Activated B cell treated with CpG ODN at 0.5 μM for 24 hours (primary cell): ENCODE measurements at regions of chr2 and their contacts with region 1.

Region 1: DNA sequence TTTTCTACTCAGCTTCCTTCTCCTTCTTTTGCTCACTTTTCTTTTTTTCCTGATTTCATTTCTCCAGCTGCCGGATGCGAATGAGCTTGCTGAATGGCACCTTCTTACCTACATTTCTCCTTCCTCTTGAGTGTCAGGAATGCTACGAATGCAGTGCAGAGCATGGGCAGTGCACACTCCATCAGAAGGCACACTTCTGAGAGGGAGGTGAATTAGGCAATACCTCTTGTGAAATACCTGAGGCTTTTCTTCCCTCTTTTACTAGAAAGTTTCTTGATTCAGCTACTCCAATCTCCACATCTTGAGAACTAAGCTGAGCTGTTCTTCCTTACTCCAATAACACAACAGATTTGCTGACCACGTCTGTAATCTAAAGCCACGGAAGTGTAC is 51.1 kb downstream of the PLEKHM3 start:
- DNase-seq: no peak
- ATAC-seq: no peak
- H3K4me3 Mint-ChIP-seq: no peak overlapping the region
- H3K27ac Mint-ChIP-seq: no peak overlapping the region
- H3K4me1 Mint-ChIP-seq: peaks cover 17% of the 10 kb centered on the region
- H3K27me3 Mint-ChIP-seq: no peaks in the 10 kb centered on the region
- CTCF ChIP-seq: no peak

Region 2: GRCh38 chr2:207954753-207955152 is 19.5 kb before region 1 on chr2:
- CTCF ChIA-PET with region 1: no interaction called
- POLR2A ChIA-PET with region 1: no interaction called
- intact Hi-C with region 1: loop called (anchors 2 kb)
- DNase-seq: no peak
- ATAC-seq: no peak
- H3K4me3 Mint-ChIP-seq: no peak overlapping the region
- H3K27ac Mint-ChIP-seq: no peak overlapping the region
- H3K4me1 Mint-ChIP-seq: peaks cover 13% of the 10 kb centered on the region
- H3K27me3 Mint-ChIP-seq: no peaks in the 10 kb centered on the region
- CTCF ChIP-seq: no peak

Region 3: DNA sequence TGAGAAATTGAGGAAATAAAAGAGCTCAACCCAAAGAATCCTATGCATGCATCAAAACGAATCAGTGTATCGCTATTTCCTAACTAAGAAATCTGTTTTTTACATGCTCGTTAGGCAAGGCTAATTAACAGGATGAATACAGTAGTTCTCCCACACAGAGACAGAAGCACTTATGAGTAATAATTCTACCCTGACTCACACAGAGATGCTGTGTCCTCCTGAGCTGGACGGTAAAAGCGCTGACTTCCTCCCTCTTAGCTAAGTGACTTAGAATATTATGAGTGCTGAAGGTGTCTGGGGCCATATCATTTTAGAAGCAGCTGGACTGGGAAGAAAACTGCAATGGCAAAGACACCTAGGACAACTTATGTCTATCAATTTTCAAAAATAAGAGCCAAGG is 32.6 kb after region 1 on chr2:
- CTCF ChIA-PET with region 1: no interaction called
- POLR2A ChIA-PET with region 1: interaction called, 13 read pairs
- intact Hi-C with region 1: no loop called
- DNase-seq: no peak
- ATAC-seq: peak; percentile 28
- H3K4me3 Mint-ChIP-seq: no peak overlapping the region
- H3K27ac Mint-ChIP-seq: no peak overlapping the region
- H3K4me1 Mint-ChIP-seq: peaks cover 5% of the 10 kb centered on the region
- H3K27me3 Mint-ChIP-seq: no peaks in the 10 kb centered on the region
- CTCF ChIP-seq: no peak

Region 4: DNA sequence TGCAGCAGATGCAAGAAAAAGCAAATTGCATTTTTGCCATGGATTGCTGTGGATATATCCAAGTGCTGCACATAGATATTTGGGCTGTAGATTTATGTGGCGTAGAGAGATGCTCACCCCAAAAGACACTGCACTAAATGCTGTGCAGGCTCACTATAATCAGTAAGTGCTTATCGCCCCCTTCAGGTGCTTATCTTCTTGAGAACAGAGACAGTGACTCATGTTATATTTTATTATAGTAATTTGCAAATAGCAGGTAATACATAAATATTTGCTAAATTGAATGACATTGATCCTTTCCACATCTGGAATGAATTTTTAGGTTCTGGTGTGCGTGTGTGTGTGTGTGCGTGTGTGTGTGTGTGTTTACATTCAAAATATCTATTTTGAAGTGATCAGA is 87.9 kb after region 1 on chr2:
- CTCF ChIA-PET with region 1: no interaction called
- POLR2A ChIA-PET with region 1: no interaction called
- intact Hi-C with region 1: no loop called
- DNase-seq: no peak
- ATAC-seq: no peak
- H3K4me3 Mint-ChIP-seq: no peak overlapping the region
- H3K27ac Mint-ChIP-seq: no peak overlapping the region
- H3K4me1 Mint-ChIP-seq: peaks cover 6% of the 10 kb centered on the region
- H3K27me3 Mint-ChIP-seq: peaks cover 6% of the 10 kb centered on the region
- CTCF ChIP-seq: no peak

Region 5: DNA sequence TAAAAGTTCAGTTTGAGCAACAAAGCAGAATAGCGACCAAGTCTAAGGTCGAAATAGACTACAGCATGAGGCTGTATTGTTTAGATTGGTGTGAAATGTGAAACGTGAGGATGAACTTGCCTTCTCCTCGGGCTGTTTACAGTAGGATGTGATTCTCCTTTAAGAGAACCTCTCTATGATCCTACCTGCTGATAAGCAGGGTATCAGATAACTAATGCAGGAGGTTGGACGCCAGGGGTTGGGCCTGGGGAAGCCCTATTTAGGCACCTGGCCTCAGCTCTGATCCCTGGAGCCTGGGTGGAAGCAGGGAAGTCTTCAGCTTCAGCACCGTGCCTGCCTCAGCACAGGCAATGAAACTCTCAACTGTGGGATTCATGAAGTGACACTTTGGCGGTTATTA is 138.8 kb after region 1 on chr2:
- CTCF ChIA-PET with region 1: no interaction called
- POLR2A ChIA-PET with region 1: no interaction called
- intact Hi-C with region 1: no loop called
- DNase-seq: no peak
- ATAC-seq: no peak
- H3K4me3 Mint-ChIP-seq: no peak overlapping the region
- H3K27ac Mint-ChIP-seq: no peak overlapping the region
- H3K4me1 Mint-ChIP-seq: no peaks in the 10 kb centered on the region
- H3K27me3 Mint-ChIP-seq: peaks cover 4% of the 10 kb centered on the region
- CTCF ChIP-seq: no peak